Activated CD8-positive, alpha-beta T cell treated with anti-CD3 and anti-CD28 coated beads for 36 hours (primary cell): ENCODE measurements at regions of chr12 and their contacts with region 1.

Region 1: GRCh38 chr12:54749191-54749818 is 101.1 kb upstream of the DCD start:
- DNase-seq: peak; percentile 44
- ATAC-seq: peak; percentile 86
- H3K4me3 Mint-ChIP-seq: peak overlapping the region; percentile 30
- H3K27ac Mint-ChIP-seq: no peak overlapping the region
- H3K4me1 Mint-ChIP-seq: peaks cover 19% of the 10 kb centered on the region
- H3K27me3 Mint-ChIP-seq: no peaks in the 10 kb centered on the region
- CTCF ChIP-seq: peak; percentile 72

Region 2: GRCh38 chr12:54509617-54510016 is 239.7 kb before region 1 on chr12:
- CTCF ChIA-PET with region 1: no interaction called
- POLR2A ChIA-PET with region 1: no interaction called
- intact Hi-C with region 1: no loop called
- DNase-seq: no peak
- ATAC-seq: no peak
- H3K4me3 Mint-ChIP-seq: no peak overlapping the region
- H3K27ac Mint-ChIP-seq: no peak overlapping the region
- H3K4me1 Mint-ChIP-seq: peaks cover 12% of the 10 kb centered on the region
- H3K27me3 Mint-ChIP-seq: no peaks in the 10 kb centered on the region
- CTCF ChIP-seq: no peak

Region 3: GRCh38 chr12:54588110-54588889 is 161.0 kb before region 1 on chr12 and contains the start of gene PPP1R1A:
- CTCF ChIA-PET with region 1: no interaction called
- POLR2A ChIA-PET with region 1: no interaction called
- intact Hi-C with region 1: no loop called
- DNase-seq: no peak
- ATAC-seq: peak; percentile 13
- H3K4me3 Mint-ChIP-seq: peak within 1 kb of the TSS; percentile 13
- H3K27ac Mint-ChIP-seq: no peak within 1 kb of the TSS
- H3K4me1 Mint-ChIP-seq: peaks cover 5% of the 10 kb centered on the region
- H3K27me3 Mint-ChIP-seq: peaks cover 56% of the 10 kb centered on the region
- CTCF ChIP-seq: no peak
- total RNA-seq, gene PPP1R1A: not detected

Region 4: DNA sequence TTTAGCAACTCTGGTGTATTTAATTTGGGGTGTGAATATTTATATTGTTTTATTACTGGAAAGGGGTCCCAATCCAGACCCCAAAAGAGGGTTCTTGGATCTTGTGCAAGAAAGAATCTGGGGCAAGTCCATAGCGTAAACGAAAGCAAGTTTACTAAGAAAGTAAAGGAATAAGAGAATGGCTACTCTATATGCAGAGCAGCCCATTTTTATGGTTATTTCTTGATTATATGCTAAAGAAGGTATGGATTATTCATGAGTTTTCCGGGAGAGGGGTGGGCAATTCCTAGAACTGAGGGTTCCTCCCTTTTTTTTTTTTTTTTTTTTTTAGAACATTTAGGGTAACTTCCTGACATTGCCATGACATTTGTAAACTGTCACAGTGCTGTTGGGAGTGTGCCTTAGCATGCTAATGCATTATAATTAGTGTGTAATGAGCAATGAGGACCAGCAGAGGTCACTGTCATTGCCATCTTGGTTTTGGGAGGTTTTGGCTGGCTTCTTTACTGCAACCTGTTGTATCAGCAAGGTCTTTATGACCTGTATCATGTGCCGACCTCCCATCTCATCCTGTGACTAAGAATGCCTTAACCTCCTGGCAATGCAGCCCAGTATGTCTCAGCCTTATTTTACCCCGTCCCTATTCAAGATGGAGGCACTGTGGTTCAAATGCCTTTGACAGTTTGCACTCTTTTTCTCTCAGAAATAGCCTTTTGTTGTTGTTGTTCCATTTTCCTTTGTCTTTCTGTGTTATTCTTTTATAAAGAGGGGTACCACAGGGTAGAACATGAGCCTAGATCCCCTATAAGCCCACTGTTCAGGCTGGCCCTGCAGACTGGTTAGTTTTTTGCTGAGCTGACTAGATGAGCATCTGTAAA is 25.7 kb before region 1 on chr12:
- CTCF ChIA-PET with region 1: interaction called, 27 read pairs
- POLR2A ChIA-PET with region 1: no interaction called
- intact Hi-C with region 1: no loop called
- DNase-seq: peak; percentile 44
- ATAC-seq: peak; percentile 75
- H3K4me3 Mint-ChIP-seq: no peak overlapping the region
- H3K27ac Mint-ChIP-seq: no peak overlapping the region
- H3K4me1 Mint-ChIP-seq: peaks cover 5% of the 10 kb centered on the region
- H3K27me3 Mint-ChIP-seq: peaks cover 1% of the 10 kb centered on the region
- CTCF ChIP-seq: peak; percentile 56

Region 5: DNA sequence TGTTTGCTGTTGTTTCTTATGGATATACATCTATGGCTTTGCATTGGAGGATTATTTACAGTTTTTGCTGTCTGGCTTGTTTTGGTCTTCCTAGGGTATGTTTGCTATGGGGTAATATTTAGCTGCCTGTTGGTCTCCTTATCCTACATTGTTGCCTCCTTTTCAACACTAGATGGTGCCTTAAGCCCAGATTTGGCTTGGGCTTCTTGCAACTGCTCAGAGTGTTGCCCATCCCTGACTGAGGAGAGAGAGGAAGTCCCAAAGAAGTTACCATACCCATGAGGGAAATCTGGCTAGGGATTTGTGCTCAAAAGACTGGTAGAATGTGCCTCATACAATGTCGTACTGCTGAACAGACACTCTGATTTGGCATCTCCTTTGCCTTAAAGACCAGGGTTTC is 10.4 kb after region 1 on chr12:
- CTCF ChIA-PET with region 1: interaction called, 34 read pairs
- POLR2A ChIA-PET with region 1: no interaction called
- intact Hi-C with region 1: no loop called
- DNase-seq: peak; percentile 28
- ATAC-seq: no peak
- H3K4me3 Mint-ChIP-seq: no peak overlapping the region
- H3K27ac Mint-ChIP-seq: no peak overlapping the region
- H3K4me1 Mint-ChIP-seq: peaks cover 15% of the 10 kb centered on the region
- H3K27me3 Mint-ChIP-seq: no peaks in the 10 kb centered on the region
- CTCF ChIP-seq: peak; percentile 47

Region 6: DNA sequence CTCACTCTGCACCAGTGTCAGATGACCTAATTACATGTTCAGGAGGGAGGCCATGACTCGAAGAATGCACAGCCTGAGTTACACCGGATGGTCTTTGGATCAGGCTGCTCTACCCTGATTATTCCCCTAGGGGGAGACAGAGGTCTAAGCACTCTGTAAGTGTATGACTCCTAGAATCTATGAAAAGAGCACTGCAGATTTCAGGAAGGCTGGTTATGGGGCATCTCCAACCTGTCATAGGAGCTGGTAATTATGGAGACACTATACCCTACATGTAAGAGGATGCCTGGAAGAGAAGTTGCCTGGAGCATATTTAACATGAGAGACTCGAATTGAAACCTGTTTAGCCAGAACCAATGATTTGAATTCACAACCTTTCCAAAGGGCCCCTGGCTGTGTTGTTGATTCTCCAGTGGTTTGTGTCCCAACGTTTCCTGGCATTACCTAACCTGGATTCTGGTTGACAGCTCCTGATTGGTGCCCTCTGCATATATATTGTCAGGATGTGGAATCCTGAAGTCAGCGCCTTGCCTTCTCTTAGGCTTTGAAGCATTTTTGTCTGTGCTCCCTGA is 104.8 kb after region 1 on chr12 and contains the start of gene MUCL1:
- CTCF ChIA-PET with region 1: interaction called, 47 read pairs
- POLR2A ChIA-PET with region 1: no interaction called
- intact Hi-C with region 1: loop called (anchors 5 kb)
- DNase-seq: peak; percentile 87
- ATAC-seq: peak; percentile 100
- H3K4me3 Mint-ChIP-seq: no peak within 1 kb of the TSS
- H3K27ac Mint-ChIP-seq: no peak within 1 kb of the TSS
- H3K4me1 Mint-ChIP-seq: peaks cover 22% of the 10 kb centered on the region
- H3K27me3 Mint-ChIP-seq: no peaks in the 10 kb centered on the region
- CTCF ChIP-seq: peak; percentile 94
- total RNA-seq, gene MUCL1: not detected

Region 7: GRCh38 chr12:54984658-54985376 is 235.5 kb after region 1 on chr12 and contains the start of gene TESPA1:
- CTCF ChIA-PET with region 1: interaction called, 25 read pairs
- POLR2A ChIA-PET with region 1: no interaction called
- intact Hi-C with region 1: loop called (anchors 5 kb)
- DNase-seq: peak; percentile 94
- ATAC-seq: peak; percentile 88
- H3K4me3 Mint-ChIP-seq: peak within 1 kb of the TSS; percentile 85
- H3K27ac Mint-ChIP-seq: peak within 1 kb of the TSS; percentile 94
- H3K4me1 Mint-ChIP-seq: peaks cover 53% of the 10 kb centered on the region
- H3K27me3 Mint-ChIP-seq: no peaks in the 10 kb centered on the region
- CTCF ChIP-seq: no peak
- total RNA-seq, gene TESPA1: 107 to 112 TPM